Natural killer cell (primary cell): ENCODE measurements at regions of chr15 and their contacts with region 1.

Region 1: GRCh38 chr15:65384895-65385858 is 7.4 kb upstream of the IGDCC3 start:
- DNase-seq: peak; percentile 78 to 92
- ATAC-seq: peak; percentile 79 to 86 (median 81)
- H3K4me3 ChIP-seq: peak overlapping the region; percentile 51
- H3K4me3 Mint-ChIP-seq: peak overlapping the region; percentile 93
- H3K27ac ChIP-seq: peak overlapping the region; percentile 48
- H3K27ac Mint-ChIP-seq: peak overlapping the region in 1 of 2 donors; percentile 87
- H3K4me1 ChIP-seq: peaks cover 19% of the 10 kb centered on the region
- H3K4me1 Mint-ChIP-seq: peaks cover 21 to 23% of the 10 kb centered on the region in 2 donors
- H3K27me3 ChIP-seq: no peaks in the 10 kb centered on the region
- H3K27me3 Mint-ChIP-seq: peaks cover 3 to 5% of the 10 kb centered on the region in 2 donors
- CTCF ChIP-seq: peak; percentile 72

Region 2: GRCh38 chr15:65028921-65029735 is 356.0 kb before region 1 on chr15 and contains the start of gene MTFMT:
- intact Hi-C with region 1: loop called (anchors 1 kb)
- DNase-seq: peak; percentile 87 to 94
- ATAC-seq: peak; percentile 97
- H3K4me3 ChIP-seq: peak within 1 kb of the TSS; percentile 79
- H3K4me3 Mint-ChIP-seq: peak within 1 kb of the TSS; percentile 91
- H3K27ac ChIP-seq: peak within 1 kb of the TSS; percentile 49
- H3K27ac Mint-ChIP-seq: peak within 1 kb of the TSS; percentile 16 to 79
- H3K4me1 ChIP-seq: peaks cover 20% of the 10 kb centered on the region
- H3K4me1 Mint-ChIP-seq: peaks cover 13 to 20% of the 10 kb centered on the region in 2 donors
- H3K27me3 ChIP-seq: peaks cover 4% of the 10 kb centered on the region
- H3K27me3 Mint-ChIP-seq: peaks cover 0 to 13% of the 10 kb centered on the region in 2 donors
- CTCF ChIP-seq: no peak
- total RNA-seq, gene MTFMT: 9.3 to 13.6 (median 12.2) TPM

Region 3: GRCh38 chr15:65054333-65055200 is 330.6 kb before region 1 on chr15:
- intact Hi-C with region 1: loop called (anchors 1 kb)
- DNase-seq: peak; percentile 44 to 71
- ATAC-seq: peak; percentile 39 to 64 (median 50)
- H3K4me3 ChIP-seq: no peak overlapping the region
- H3K4me3 Mint-ChIP-seq: no peak overlapping the region
- H3K27ac ChIP-seq: no peak overlapping the region
- H3K27ac Mint-ChIP-seq: no peak overlapping the region
- H3K4me1 ChIP-seq: peaks cover 5% of the 10 kb centered on the region
- H3K4me1 Mint-ChIP-seq: peaks cover 6 to 8% of the 10 kb centered on the region in 2 donors
- H3K27me3 ChIP-seq: no peaks in the 10 kb centered on the region
- H3K27me3 Mint-ChIP-seq: no peaks in the 10 kb centered on the region
- CTCF ChIP-seq: peak; percentile 63

Region 4: DNA sequence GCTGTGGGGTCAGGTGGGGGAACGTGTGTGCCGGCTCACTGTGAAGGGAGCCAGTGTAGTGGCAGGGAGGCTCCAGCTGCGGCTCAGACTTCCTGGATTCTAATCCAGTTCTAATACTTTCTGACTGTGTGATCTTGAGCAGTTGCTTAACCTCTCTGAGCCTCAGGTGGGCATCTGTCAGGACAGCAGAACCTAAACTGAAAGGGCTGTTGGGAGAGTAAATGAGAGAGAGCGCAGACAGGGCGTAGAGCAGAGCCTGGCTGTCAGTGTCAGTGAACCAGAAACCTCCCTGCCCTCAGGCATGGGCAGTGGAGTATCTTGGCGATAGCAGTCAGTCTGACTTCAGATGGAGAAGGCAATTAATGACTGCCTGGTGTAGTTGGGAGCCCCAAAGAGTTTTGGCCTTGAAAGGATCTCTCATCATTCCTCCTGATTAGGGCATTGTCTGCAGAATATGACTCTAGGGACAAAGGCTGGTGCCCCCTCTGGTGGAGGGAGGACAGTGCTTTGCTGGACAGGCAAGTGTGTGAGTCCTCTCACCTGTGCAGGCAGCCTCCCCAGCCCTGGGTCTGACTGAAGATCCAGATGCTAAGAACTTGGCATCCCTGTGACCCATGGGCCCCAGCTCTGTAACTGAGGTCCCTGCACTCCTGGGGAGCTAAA is 299.0 kb before region 1 on chr15:
- intact Hi-C with region 1: no loop called
- DNase-seq: peak in 1 of 2 donors; percentile 22
- ATAC-seq: peak in 1 of 3 donors; percentile 29
- H3K4me3 ChIP-seq: no peak overlapping the region
- H3K4me3 Mint-ChIP-seq: no peak overlapping the region
- H3K27ac ChIP-seq: no peak overlapping the region
- H3K27ac Mint-ChIP-seq: no peak overlapping the region
- H3K4me1 ChIP-seq: peaks cover 7% of the 10 kb centered on the region
- H3K4me1 Mint-ChIP-seq: peaks cover 11 to 19% of the 10 kb centered on the region in 2 donors
- H3K27me3 ChIP-seq: peaks cover 6% of the 10 kb centered on the region
- H3K27me3 Mint-ChIP-seq: peaks cover 26 to 34% of the 10 kb centered on the region in 2 donors
- CTCF ChIP-seq: no peak

Region 5: GRCh38 chr15:65184868-65185738 is 200.1 kb before region 1 on chr15 and contains the start of gene CLPX:
- intact Hi-C with region 1: loop called (anchors 10 kb)
- DNase-seq: peak; percentile 80 to 97
- ATAC-seq: peak; percentile 88 to 96 (median 91)
- H3K4me3 ChIP-seq: peak within 1 kb of the TSS; percentile 68
- H3K4me3 Mint-ChIP-seq: peak within 1 kb of the TSS; percentile 93
- H3K27ac ChIP-seq: peak within 1 kb of the TSS; percentile 76
- H3K27ac Mint-ChIP-seq: peak within 1 kb of the TSS; percentile 91 to 92
- H3K4me1 ChIP-seq: peaks cover 24% of the 10 kb centered on the region
- H3K4me1 Mint-ChIP-seq: peaks cover 26 to 31% of the 10 kb centered on the region in 2 donors
- H3K27me3 ChIP-seq: no peaks in the 10 kb centered on the region
- H3K27me3 Mint-ChIP-seq: no peaks in the 10 kb centered on the region
- CTCF ChIP-seq: no peak
- total RNA-seq, gene CLPX: 35.4 to 39.9 (median 38.2) TPM

Region 6: DNA sequence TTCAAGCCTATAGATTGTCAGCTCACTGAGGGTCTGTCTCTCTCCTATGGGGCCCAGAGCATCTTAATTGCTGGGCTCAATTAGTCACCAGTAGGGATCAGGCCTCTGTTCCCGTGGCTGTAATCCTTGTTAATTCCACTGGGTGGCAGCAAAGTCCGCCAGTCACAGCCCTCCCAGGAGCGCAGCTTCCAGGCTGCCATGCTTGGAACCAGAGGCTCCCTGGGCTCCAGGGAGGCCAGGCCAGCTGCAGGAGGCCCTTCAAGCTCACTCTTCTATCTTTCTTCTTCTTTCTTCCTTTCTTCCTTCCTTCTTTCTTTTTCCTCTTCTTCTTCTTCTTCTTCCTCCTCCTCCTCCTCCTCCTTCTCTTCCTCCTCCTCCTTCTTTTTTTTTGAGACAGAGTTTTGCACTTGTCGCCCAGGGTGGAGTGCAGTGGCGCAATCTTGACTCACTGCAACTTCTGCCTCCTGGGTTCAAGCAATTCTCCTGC is 66.3 kb before region 1 on chr15:
- intact Hi-C with region 1: loop called (anchors 1 kb)
- DNase-seq: peak; percentile 71 to 86
- ATAC-seq: peak; percentile 93 to 100 (median 99)
- H3K4me3 ChIP-seq: no peak overlapping the region
- H3K4me3 Mint-ChIP-seq: no peak overlapping the region
- H3K27ac ChIP-seq: no peak overlapping the region
- H3K27ac Mint-ChIP-seq: no peak overlapping the region
- H3K4me1 ChIP-seq: no peaks in the 10 kb centered on the region
- H3K4me1 Mint-ChIP-seq: peaks cover 5% of the 10 kb centered on the region in 2 donors
- H3K27me3 ChIP-seq: peaks cover 5% of the 10 kb centered on the region
- H3K27me3 Mint-ChIP-seq: peaks cover 0 to 8% of the 10 kb centered on the region in 2 donors
- CTCF ChIP-seq: peak; percentile 93